Common myeloid progenitor, CD34-positive (primary cell): ENCODE measurements at regions of chr2 and their contacts with region 1.

Region 1: DNA sequence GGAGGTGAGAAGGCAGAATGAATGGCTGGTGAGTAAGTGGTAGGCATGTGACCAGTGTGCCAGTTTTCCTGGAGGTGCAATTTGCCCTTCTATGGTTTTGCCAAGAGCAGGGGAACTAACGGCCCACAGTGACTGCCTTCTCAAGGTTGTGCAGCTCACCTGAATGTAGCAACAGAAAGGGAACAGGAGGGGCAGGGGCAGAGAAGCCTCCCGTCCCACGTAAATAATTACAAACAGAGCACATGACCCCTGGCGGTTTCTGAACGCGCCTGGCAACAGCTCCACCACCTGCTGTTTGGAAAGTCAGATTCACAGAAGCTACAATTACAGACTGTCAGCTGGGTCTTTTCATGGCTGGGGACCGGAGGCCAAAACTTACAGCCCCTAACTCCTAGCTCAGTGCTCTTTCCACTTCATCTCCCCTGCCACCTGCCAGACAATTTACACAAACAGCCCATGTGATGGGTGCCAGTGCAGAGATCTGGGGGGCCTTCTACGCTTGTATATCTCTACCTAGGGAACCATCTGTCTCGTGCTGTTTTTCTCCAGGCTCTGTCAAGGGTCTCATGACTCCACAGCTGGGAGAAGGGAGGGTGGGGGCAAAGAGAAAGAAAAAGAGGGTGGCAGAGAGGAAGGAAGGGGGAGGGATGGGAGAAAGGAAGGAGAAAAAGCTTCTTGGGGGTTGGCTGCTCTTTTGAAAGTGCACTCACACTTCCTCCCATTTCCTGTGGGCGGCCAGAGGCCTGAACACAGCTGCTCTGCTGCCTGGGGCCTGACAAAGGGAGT is 69.6 kb downstream of the POLR1A start:
- DNase-seq: peak; percentile 70 to 90 (median 84)
- H3K4me3 ChIP-seq: peak overlapping the region in 4 of 7 experiments; percentile 25 to 50 (median 34)
- H3K27ac ChIP-seq: peak overlapping the region; percentile 40 to 82
- H3K4me1 ChIP-seq: peaks cover 17 to 62% (median 52%) of the 10 kb centered on the region in 4 experiments
- H3K27me3 ChIP-seq: no peaks in the 10 kb centered on the region

Region 2: GRCh38 chr2:85998071-85998991 is 37.7 kb before region 1 on chr2:
- CTCF ChIA-PET with region 1: interaction called, 15 read pairs
- POLR2A ChIA-PET with region 1: no interaction called
- DNase-seq: no peak
- H3K4me3 ChIP-seq: no peak overlapping the region
- H3K27ac ChIP-seq: peak overlapping the region in 1 of 2 experiments; percentile 36
- H3K4me1 ChIP-seq: peaks cover 23 to 86% (median 62%) of the 10 kb centered on the region in 4 experiments
- H3K27me3 ChIP-seq: no peaks in the 10 kb centered on the region

Region 3: GRCh38 chr2:86020984-86021383 is 15.1 kb before region 1 on chr2:
- CTCF ChIA-PET with region 1: interaction called, 19 read pairs
- POLR2A ChIA-PET with region 1: interaction called, 4 read pairs
- DNase-seq: no peak
- H3K4me3 ChIP-seq: no peak overlapping the region
- H3K27ac ChIP-seq: no peak overlapping the region
- H3K4me1 ChIP-seq: peaks cover 0 to 8% (median under 1%) of the 10 kb centered on the region in 4 experiments
- H3K27me3 ChIP-seq: no peaks in the 10 kb centered on the region

Region 4: GRCh38 chr2:86352137-86352726 is 316.2 kb after region 1 on chr2:
- CTCF ChIA-PET with region 1: no interaction called
- POLR2A ChIA-PET with region 1: no interaction called
- DNase-seq: no peak
- H3K4me3 ChIP-seq: no peak overlapping the region
- H3K27ac ChIP-seq: no peak overlapping the region
- H3K4me1 ChIP-seq: no peaks in the 10 kb centered on the region
- H3K27me3 ChIP-seq: peaks cover 0 to 9% (median 2%) of the 10 kb centered on the region in 5 experiments